ENCODE measurements at regions of chr22 and their contacts with region 1.

Region 1: GRCh38 chr22:17638432-17639246 is at the start of gene BCL2L13:
- DNase-seq: peak; percentile 88
- H3K4me3 ChIP-seq: peak within 1 kb of the TSS; percentile 63 to 91 (median 81)
- H3K27ac ChIP-seq: peak within 1 kb of the TSS; percentile 97
- H3K4me1 ChIP-seq: peaks cover 18% of the 10 kb centered on the region
- H3K27me3 ChIP-seq: no peaks in the 10 kb centered on the region
- CTCF ChIP-seq: no peak
- total RNA-seq, gene BCL2L13: 62.5 to 67.5 TPM

Region 2: DNA sequence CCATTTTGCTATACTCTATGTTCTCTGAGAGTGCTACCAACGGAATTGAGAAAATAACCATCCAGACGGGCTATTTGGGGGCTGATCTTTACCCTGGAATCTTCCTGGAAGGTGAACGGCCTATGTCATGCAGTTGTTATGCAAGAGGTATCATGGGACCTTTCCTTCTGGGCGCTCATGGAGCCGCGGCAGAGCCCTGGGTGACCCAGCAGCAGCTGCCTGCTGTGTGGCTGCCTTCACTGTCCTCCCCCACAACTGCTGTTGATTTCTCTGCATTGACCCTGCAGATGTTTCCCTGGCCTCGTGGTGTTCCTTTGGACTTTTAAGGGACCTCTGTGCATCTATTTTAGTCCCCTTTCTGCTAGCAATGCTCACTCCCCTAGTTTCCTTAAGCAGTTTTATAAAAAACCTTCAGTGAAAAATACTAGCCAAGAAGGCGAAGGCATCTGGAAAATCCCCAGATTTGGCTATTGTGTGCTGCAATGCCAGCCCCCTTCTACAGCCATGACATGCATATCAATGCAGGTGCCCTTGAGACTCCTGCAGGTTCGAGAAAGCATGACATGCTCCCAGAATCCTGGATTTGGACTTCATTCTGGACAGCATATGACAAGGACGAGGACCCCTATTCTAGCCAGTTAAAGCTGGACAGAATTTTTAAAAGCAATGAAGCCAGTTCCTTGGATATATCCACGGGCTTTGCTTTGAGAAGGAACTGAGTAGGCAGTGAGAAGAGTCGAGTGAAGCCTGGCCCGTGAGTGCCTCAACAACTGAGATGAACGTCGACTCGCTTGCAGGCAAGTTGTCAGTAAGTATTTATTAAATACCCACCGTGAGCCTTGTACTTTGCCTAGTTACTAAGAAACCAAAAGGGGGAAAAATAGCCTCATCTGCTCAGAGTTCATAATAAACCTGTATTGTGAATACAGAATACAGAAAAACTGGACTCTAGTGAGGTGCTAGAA is 75.5 kb before region 1 on chr22 and contains the start of gene SLC25A18:
- CTCF ChIA-PET with region 1: interaction called, 3 read pairs
- dilution Hi-C with region 1: no loop called
- in situ Hi-C with region 1: no loop called
- intact Hi-C with region 1: loop called (anchors 1 kb)
- DNase-seq: no peak
- H3K4me3 ChIP-seq: no peak within 1 kb of the TSS
- H3K27ac ChIP-seq: no peak within 1 kb of the TSS
- H3K4me1 ChIP-seq: no peaks in the 10 kb centered on the region
- H3K27me3 ChIP-seq: peaks cover 2% of the 10 kb centered on the region
- CTCF ChIP-seq: no peak
- total RNA-seq, gene SLC25A18: 0.33 TPM in 1 of 2 donors, not detected in the other

Region 3: DNA sequence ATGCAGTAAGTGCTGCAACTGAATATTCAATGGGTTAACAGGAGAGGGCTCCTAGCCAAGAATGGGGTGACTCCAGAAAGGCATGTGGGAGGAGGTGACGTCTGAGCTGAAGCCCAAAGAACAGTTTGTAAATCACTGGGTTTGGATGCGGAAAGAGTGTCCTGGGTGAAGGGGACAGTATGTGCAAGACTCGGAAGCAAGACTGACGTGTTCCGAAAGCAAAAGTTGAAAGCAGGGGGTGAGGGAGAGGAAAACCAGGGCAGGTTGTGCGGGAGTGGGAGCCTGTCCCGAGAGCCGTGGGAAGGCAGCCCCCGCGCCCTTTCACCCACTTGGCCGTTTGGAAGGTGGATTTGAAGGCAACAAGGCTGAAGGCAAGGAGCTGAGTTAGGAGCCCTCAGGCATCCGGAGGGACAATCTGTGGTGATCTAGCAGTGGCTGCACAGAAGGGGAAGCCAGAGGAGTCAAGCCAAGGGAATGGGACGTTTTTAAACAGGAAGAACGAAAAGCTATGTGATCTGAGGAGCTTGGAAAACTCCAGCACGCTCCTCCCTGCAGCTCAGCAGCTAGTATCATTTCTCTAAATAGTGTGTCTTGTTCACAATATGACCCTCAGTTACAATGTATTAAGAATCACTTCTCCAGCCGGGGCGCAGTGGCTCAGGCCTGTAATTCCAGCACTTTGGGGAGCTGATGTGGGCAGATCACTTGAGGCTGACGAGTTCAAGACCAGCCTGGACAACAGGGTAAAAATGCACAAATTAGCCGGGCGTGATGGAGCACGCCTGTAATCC is 67.6 kb before region 1 on chr22:
- CTCF ChIA-PET with region 1: no interaction called
- dilution Hi-C with region 1: no loop called
- in situ Hi-C with region 1: loop called in 1 of 2 experiments (anchors 10 kb)
- intact Hi-C with region 1: loop called (anchors 1 kb)
- DNase-seq: peak; percentile 53
- H3K4me3 ChIP-seq: peak overlapping the region in 1 of 3 experiments; percentile 13
- H3K27ac ChIP-seq: peak overlapping the region; percentile 42
- H3K4me1 ChIP-seq: peaks cover 23% of the 10 kb centered on the region
- H3K27me3 ChIP-seq: no peaks in the 10 kb centered on the region
- CTCF ChIP-seq: no peak

Region 4: DNA sequence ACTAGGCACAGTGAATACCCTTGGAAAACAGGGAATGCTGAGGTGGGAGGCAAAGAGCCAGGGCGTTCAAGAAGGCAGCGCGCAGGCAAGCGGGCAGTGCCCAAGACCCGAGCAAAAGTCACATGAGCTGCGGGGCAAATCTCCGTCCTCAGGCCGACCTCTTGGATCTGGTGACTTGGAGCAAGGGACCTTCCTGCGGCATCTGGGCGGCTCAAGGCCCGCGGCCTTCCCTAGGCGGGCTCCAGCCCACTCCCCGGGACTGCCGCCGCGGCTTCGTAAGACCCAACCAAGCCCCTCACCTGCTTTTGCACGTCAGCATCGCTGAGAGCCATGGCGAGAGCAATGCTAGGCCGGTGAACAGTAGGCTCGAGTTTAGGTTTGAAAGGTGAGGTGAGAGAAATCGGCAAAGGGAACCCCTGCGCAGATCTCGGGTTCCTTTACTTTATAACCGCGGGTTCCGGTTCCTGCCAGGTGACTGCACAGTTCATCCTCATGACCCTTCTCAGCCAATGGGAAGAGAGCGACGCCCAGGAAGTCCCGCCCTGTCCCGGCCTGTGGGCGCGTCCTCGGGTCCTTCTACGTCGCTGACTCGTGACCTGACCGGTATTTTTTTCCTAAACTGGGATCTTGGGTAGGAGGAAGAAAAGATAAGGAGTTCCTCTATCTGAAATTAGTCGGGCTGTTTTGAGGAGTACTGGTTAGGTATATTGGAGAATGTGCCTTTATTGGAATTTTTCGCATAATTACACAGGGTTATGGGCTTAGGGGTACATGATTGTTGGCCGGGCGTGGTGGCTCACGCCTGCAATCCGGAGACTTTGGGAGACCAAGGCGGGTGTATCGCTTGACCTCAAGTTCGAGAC is 10.1 kb before region 1 on chr22 and contains the start of gene ATP6V1E1:
- CTCF ChIA-PET with region 1: no interaction called
- dilution Hi-C with region 1: no loop called
- in situ Hi-C with region 1: no loop called
- intact Hi-C with region 1: loop called (anchors 1 kb)
- DNase-seq: peak; percentile 96
- H3K4me3 ChIP-seq: peak within 1 kb of the TSS; percentile 69 to 97 (median 93)
- H3K27ac ChIP-seq: peak within 1 kb of the TSS; percentile 97
- H3K4me1 ChIP-seq: peaks cover 21% of the 10 kb centered on the region
- H3K27me3 ChIP-seq: no peaks in the 10 kb centered on the region
- CTCF ChIP-seq: no peak
- total RNA-seq, gene ATP6V1E1: 118 to 148 TPM

Region 5: DNA sequence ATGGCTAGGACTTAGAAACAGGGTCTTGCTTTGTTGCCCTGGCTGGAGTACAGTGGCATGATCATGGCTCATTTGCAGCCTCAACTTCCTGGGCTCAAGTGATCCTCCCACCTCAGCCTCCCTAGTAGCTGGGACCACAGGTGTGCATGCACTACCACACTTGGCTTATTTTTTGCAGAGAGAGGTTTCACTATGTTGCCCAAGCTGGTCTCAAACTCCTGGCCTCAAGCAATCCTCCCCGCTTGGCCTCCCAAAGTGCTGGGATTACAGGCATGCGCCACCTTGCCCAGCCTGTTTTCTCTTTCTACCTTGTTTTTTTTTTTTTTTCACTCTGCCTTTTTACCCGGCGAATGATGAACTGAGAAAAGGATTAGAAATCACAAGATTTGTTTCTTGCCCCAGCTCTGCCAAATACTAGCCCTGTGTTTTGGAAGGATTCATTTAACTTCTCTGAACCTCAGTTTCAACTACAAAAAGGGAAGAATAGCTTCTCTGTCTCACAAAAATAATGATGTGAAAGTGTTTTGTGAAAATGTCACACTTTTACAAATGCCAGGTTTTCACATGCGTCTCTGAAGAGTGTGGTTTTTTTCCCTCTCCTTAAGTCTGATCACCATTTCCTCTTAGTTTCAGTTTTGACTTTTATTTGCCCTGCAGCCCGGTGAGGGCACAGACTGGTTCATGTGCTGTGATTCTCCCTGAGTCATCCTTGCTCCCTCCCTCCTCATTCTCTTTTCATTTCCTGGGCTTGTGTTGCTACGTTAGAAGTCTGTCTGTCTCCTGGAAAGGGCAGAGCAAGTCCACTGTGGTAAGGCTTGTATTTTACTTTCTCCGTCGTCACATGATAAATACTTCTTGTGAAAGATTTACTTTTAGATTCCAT is 67.6 kb after region 1 on chr22:
- CTCF ChIA-PET with region 1: no interaction called
- dilution Hi-C with region 1: loop called (anchors 5 kb)
- in situ Hi-C with region 1: loop called in 1 of 2 experiments (anchors 10 kb)
- intact Hi-C with region 1: loop called (anchors 2 kb)
- DNase-seq: peak; percentile 95
- H3K4me3 ChIP-seq: peak overlapping the region; percentile 27 to 38 (median 36)
- H3K27ac ChIP-seq: peak overlapping the region; percentile 71
- H3K4me1 ChIP-seq: peaks cover 19% of the 10 kb centered on the region
- H3K27me3 ChIP-seq: no peaks in the 10 kb centered on the region
- CTCF ChIP-seq: no peak

Region 6: DNA sequence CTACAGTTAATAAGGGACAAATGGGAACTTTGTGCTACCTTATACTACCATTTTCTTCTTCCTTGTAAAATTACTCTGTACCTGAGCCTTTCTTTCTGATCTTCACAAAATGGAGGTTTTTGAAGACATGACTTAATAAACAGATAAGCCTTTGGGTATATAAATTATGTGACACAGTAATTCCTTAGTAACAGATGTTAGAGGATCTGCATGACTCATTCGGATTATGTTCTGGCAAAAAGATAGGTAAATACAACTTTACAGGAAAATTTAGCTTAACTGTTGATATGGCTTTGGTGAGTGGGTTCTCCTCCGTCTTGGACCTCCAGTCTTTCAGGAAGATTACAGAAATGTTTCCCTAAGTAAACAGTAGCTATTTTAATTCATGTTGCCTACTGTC is 73.8 kb after region 1 on chr22:
- CTCF ChIA-PET with region 1: no interaction called
- dilution Hi-C with region 1: loop called (anchors 5 kb)
- in situ Hi-C with region 1: loop called in 1 of 2 experiments (anchors 10 kb)
- intact Hi-C with region 1: loop called (anchors 2 kb)
- DNase-seq: no peak
- H3K4me3 ChIP-seq: no peak overlapping the region
- H3K27ac ChIP-seq: no peak overlapping the region
- H3K4me1 ChIP-seq: peaks cover 11% of the 10 kb centered on the region
- H3K27me3 ChIP-seq: no peaks in the 10 kb centered on the region
- CTCF ChIP-seq: no peak

Measured in mammary epithelial cell (primary cell).